ENCODE measurements at regions of chr3 and their contacts with region 1.

Region 1: DNA sequence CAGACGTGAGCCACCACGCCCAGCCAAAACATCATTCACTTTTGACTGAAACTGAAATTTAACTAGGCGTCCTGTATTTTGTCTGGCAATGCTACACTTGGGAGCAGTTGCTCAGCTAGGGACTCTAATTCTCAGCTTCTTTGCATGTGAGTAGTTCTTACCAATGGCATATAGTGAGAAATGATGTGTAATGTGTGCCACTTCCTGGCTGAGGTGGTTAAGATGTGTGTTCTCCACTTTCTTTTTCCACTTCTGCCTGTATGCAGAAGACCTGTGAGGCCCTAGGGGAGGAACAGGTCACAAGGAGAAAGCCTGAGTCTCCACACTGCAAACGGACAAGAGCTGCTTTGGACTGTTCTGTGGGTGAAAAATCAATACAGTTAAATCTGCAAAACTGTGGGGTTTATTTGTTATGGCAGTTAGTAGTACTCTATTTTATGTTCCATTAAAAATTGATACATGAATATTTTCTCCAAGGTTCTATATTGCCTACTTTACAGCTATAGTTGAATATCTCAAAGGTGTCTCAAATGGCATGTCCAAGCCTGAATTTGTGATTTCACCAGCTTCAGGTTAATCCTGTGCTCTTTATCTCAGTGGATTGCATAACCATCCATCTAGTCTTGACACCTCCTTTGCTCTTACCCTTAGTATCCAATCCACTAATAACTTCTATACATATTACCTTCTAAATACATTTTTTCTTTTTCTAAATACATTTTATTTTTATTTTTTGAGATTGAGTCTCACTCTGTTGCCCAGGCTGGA is 59.3 kb downstream of the NR1D2 start:
- DNase-seq: no peak
- ATAC-seq: no peak
- H3K4me3 ChIP-seq: no peak overlapping the region
- H3K27ac ChIP-seq: no peak overlapping the region
- H3K4me1 ChIP-seq: no peaks in the 10 kb centered on the region
- H3K27me3 ChIP-seq: no peaks in the 10 kb centered on the region
- CTCF ChIP-seq: no peak
- POLR2A ChIP-seq: no peak

Region 2: DNA sequence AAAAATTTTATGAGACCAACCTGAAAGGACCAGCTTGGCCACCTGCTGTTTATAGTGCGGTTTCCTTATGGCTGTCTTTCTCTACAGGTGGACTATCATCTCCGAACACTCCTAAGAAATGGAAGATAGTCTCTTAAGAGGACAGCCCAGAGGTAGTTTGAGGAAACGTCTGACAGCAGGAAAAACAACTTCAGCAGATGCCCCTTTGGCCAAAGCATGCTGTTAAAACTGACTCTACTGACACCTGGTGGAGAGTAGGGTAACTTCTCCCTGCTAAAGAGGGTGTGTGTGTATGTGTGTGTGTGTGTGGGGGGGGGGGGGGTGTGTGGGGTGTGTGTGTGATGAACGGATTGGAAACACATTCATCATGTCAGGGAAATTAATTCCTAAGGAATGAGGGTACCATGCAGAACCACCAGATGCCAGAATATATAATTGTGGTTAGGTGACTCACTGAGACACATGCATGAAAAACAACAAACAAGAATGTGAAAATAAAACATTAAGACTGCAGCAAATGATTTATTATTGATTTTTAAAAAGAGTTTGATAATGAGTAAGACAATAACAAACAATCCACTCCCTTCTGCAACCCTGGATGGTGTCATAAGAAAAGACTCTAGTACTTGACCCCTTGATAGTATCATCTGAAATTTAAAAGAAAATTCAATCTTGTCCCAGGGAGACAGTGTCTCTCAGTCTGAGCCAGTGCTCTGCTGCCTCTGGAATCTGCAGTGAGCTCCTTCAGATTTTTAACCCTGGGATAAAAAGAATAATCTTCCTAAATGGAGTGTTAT is 233.8 kb after region 1 on chr3:
- intact Hi-C with region 1: loop called in 1 of 2 experiments (anchors 10 kb)
- DNase-seq: no peak
- ATAC-seq: peak; percentile 85 to 90 (median 88)
- H3K4me3 ChIP-seq: no peak overlapping the region
- H3K27ac ChIP-seq: no peak overlapping the region
- H3K4me1 ChIP-seq: no peaks in the 10 kb centered on the region
- H3K27me3 ChIP-seq: no peaks in the 10 kb centered on the region
- CTCF ChIP-seq: peak; percentile 36 to 62 (median 44)
- POLR2A ChIP-seq: no peak

Region 3: GRCh38 chr3:24680214-24680967 is 676.0 kb after region 1 on chr3:
- intact Hi-C with region 1: loop called in 1 of 2 experiments (anchors 10 kb)
- DNase-seq: peak; percentile 63 to 73 (median 70)
- ATAC-seq: peak; percentile 85 to 92 (median 87)
- H3K4me3 ChIP-seq: no peak overlapping the region
- H3K27ac ChIP-seq: no peak overlapping the region
- H3K4me1 ChIP-seq: peaks cover 0 to 8% (median 3%) of the 10 kb centered on the region in 4 donors
- H3K27me3 ChIP-seq: no peaks in the 10 kb centered on the region
- CTCF ChIP-seq: peak; percentile 59 to 92 (median 91)
- POLR2A ChIP-seq: no peak

Measured in right lobe of liver (tissue), 6 donors.